Head of caudate nucleus (tissue), 42 donors: ENCODE measurements at regions of chr10 and their contacts with region 1.

Region 1: DNA sequence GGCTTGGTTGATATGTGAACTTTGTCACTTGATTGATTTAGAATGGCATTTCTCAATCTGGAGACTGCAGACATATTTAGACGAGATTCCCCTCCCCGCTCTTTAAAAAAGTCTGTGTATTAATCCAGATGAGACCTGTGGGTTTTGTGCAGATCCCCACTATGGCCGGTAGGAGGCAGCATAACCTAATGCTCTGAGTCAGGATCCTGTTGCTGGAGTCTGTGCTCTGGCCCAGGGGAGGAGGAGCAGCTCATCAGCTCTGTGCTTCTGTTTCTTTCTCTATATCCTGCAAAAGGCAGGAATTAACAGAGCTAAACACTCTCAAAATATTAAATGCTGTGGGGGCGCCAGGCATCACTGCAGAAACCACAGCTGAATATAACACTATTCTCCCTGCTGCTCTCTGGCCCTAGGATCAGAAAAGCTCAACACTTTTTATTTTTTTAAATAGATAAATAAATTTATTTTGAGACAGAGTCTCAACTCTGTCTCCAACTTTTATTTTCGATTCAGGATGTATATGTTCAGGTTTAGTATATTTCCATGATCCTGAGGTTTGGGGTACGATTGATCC is 23.9 kb upstream of the SEPHS1 start:
- DNase-seq: peak; percentile 53 to 90 (median 74)

Region 2: GRCh38 chr10:13439313-13440184 is 67.6 kb after region 1 on chr10:
- intact Hi-C with region 1: loop called (anchors 5 kb)
- DNase-seq: peak in 8 of 42 donors; percentile 7 to 36 (median 20)